CD8-positive, alpha-beta memory T cell (primary cell): ENCODE measurements at regions of chr18 and their contacts with region 1.

Region 1: GRCh38 chr18:63320046-63320689 is 599 bp upstream of the BCL2 start:
- DNase-seq: peak; percentile 81 to 93 (median 89)
- H3K4me3 ChIP-seq: peak overlapping the region; percentile 34
- H3K4me3 Mint-ChIP-seq: peak overlapping the region; percentile 87 to 99 (median 92)
- H3K27ac ChIP-seq: no peak overlapping the region
- H3K27ac Mint-ChIP-seq: peak overlapping the region; percentile 65 to 95 (median 90)
- H3K4me1 ChIP-seq: peaks cover 13% of the 10 kb centered on the region
- H3K4me1 Mint-ChIP-seq: peaks cover 30 to 56% (median 54%) of the 10 kb centered on the region in 3 donors
- H3K27me3 ChIP-seq: no peaks in the 10 kb centered on the region
- H3K27me3 Mint-ChIP-seq: no peaks in the 10 kb centered on the region

Region 2: DNA sequence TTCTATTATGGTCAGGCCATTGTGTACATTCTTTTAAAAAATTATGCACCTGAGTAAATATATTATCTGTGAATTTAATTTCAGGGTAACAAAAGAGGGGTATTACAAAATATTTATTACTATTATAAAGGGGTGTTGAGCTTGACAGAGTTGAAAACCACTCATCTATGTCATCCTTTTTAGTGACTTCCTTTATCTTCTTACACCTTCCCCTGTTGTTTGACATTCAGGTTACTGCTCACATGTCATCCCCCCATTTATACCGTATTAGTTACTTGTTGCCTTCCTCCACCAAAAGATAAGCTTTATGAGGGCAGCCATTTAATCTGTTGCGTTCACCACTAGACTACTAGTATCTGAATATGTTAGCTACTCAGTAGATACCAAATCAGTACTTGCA is 291.8 kb before region 1 on chr18:
- CTCF ChIA-PET with region 1: no interaction called
- POLR2A ChIA-PET with region 1: no interaction called
- DNase-seq: no peak
- H3K4me3 ChIP-seq: no peak overlapping the region
- H3K4me3 Mint-ChIP-seq: no peak overlapping the region
- H3K27ac ChIP-seq: no peak overlapping the region
- H3K27ac Mint-ChIP-seq: no peak overlapping the region
- H3K4me1 ChIP-seq: no peaks in the 10 kb centered on the region
- H3K4me1 Mint-ChIP-seq: no peaks in the 10 kb centered on the region
- H3K27me3 ChIP-seq: no peaks in the 10 kb centered on the region
- H3K27me3 Mint-ChIP-seq: peaks cover 2 to 4% of the 10 kb centered on the region in 2 donors

Region 3: DNA sequence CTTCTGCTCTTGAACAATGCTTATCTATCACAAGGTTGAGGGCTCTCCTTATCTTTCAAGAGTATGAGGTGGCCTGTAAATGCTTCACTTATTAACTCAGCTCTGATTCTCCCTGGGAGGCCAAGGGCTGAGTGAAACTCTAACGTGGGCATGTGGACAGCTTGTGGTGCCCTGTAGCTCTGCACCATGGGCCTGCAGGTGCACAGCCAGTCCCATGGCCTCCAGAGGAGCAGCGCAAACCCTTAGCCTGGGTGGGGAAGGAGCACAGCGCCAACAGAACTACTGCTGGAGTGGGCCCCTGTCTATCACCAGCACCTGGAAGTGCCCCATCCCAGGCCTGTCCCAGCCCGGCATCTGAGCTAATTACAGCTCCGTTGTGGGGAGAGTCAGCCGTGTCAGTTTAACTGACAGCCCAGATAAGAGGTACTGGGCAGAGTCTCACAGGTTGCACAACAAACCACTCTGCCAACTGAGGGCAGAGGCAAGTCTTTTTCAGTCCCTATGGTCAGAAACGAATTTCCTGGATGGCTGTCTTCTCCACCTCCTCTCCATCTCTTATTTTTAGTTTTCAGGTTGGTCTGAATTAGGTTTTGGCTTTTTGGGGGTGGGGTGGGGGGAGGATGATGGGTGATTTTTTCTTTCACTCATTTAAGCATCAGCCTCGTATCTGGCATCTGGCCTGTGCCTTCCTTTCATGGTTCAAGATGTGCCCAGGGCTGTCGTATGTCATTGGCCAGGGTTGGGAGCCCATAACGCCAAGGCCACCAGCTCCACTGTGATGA is 220.1 kb before region 1 on chr18:
- CTCF ChIA-PET with region 1: no interaction called
- POLR2A ChIA-PET with region 1: no interaction called
- DNase-seq: no peak
- H3K4me3 ChIP-seq: no peak overlapping the region
- H3K4me3 Mint-ChIP-seq: peak overlapping the region in 3 of 7 donors; percentile 12 to 39 (median 37)
- H3K27ac ChIP-seq: no peak overlapping the region
- H3K27ac Mint-ChIP-seq: peak overlapping the region in 1 of 8 donors; percentile 7
- H3K4me1 ChIP-seq: peaks cover 50% of the 10 kb centered on the region
- H3K4me1 Mint-ChIP-seq: peaks cover 39 to 56% (median 50%) of the 10 kb centered on the region in 3 donors
- H3K27me3 ChIP-seq: no peaks in the 10 kb centered on the region
- H3K27me3 Mint-ChIP-seq: peaks cover 0 to 3% of the 10 kb centered on the region in 2 donors

Region 4: DNA sequence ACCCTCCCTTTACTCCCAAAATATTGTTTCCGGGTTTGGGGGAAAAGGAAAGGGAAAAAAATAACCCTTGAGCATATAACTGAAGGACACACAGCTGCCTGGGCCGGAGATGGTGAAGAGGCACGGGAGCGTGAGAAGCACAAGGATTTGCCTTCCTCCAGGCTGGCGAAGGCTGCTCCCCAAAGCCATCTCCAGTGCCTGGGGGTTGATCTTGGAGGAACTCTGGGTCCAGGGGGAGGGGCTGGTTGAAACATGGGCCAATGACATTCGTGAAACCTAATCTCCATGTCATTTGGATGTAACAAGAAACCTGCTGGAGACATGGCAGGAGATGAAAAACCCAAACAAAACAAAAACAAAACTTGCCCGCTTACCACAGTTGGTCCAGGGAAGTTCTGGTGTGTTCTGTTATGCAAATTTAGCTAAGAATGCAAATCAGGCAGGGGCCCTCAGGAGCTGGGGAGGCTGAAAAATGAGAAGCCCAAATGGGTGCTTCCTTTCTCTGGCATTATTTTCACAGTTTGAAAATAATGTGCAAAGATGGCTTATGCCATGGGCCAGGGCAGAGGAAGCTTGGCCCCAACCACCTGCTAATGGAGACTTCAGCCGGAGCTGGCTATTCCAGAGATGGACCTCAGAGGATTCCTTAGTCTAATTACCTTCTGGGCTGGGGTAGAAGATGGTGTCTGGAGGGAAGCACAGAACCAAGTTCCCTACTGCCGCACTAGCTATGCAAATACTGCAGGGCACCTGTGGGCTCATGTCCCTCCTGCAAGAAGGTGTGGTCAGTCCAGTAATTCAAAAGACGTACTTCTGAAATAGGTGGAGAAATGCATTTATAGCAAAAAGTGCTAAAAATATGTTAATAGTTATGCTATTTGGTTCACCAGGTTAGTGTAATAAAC is 181.5 kb before region 1 on chr18:
- CTCF ChIA-PET with region 1: interaction called, 50 read pairs
- POLR2A ChIA-PET with region 1: no interaction called
- DNase-seq: no peak
- H3K4me3 ChIP-seq: peak overlapping the region; percentile 42
- H3K4me3 Mint-ChIP-seq: peak overlapping the region; percentile 53 to 94 (median 87)
- H3K27ac ChIP-seq: no peak overlapping the region
- H3K27ac Mint-ChIP-seq: peak overlapping the region; percentile 86 to 97 (median 94)
- H3K4me1 ChIP-seq: peaks cover 30% of the 10 kb centered on the region
- H3K4me1 Mint-ChIP-seq: peaks cover 52 to 79% (median 76%) of the 10 kb centered on the region in 3 donors
- H3K27me3 ChIP-seq: no peaks in the 10 kb centered on the region
- H3K27me3 Mint-ChIP-seq: peaks cover 0 to 2% of the 10 kb centered on the region in 2 donors

Region 5: GRCh38 chr18:63161761-63162195 is 158.4 kb before region 1 on chr18:
- CTCF ChIA-PET with region 1: interaction called, 144 read pairs
- POLR2A ChIA-PET with region 1: interaction called, 21 read pairs
- DNase-seq: peak; percentile 66 to 92 (median 79)
- H3K4me3 ChIP-seq: peak overlapping the region; percentile 38
- H3K4me3 Mint-ChIP-seq: peak overlapping the region; percentile 72 to 89 (median 85)
- H3K27ac ChIP-seq: peak overlapping the region; percentile 92
- H3K27ac Mint-ChIP-seq: peak overlapping the region; percentile 92 to 99 (median 96)
- H3K4me1 ChIP-seq: peaks cover 77% of the 10 kb centered on the region
- H3K4me1 Mint-ChIP-seq: peaks cover 90 to 96% (median 96%) of the 10 kb centered on the region in 3 donors
- H3K27me3 ChIP-seq: no peaks in the 10 kb centered on the region
- H3K27me3 Mint-ChIP-seq: no peaks in the 10 kb centered on the region

Region 6: GRCh38 chr18:63224630-63225029 is 95.5 kb before region 1 on chr18:
- CTCF ChIA-PET with region 1: interaction called, 10 read pairs
- POLR2A ChIA-PET with region 1: interaction called, 5 read pairs
- DNase-seq: no peak
- H3K4me3 ChIP-seq: no peak overlapping the region
- H3K4me3 Mint-ChIP-seq: peak overlapping the region in 5 of 7 donors; percentile 1 to 37 (median 15)
- H3K27ac ChIP-seq: no peak overlapping the region
- H3K27ac Mint-ChIP-seq: peak overlapping the region; percentile 34 to 89 (median 75)
- H3K4me1 ChIP-seq: peaks cover 59% of the 10 kb centered on the region
- H3K4me1 Mint-ChIP-seq: peaks cover 71 to 89% (median 86%) of the 10 kb centered on the region in 3 donors
- H3K27me3 ChIP-seq: no peaks in the 10 kb centered on the region
- H3K27me3 Mint-ChIP-seq: no peaks in the 10 kb centered on the region

Region 7: GRCh38 chr18:63292831-63293683 is 27.1 kb before region 1 on chr18:
- CTCF ChIA-PET with region 1: interaction called, 58 read pairs
- POLR2A ChIA-PET with region 1: interaction called, 15 read pairs
- DNase-seq: peak in 2 of 5 donors; percentile 6 to 55
- H3K4me3 ChIP-seq: peak overlapping the region; percentile 20
- H3K4me3 Mint-ChIP-seq: peak overlapping the region; percentile 14 to 79 (median 66)
- H3K27ac ChIP-seq: peak overlapping the region; percentile 12
- H3K27ac Mint-ChIP-seq: peak overlapping the region in 5 of 8 donors; percentile 56 to 93 (median 80)
- H3K4me1 ChIP-seq: peaks cover 60% of the 10 kb centered on the region
- H3K4me1 Mint-ChIP-seq: peaks cover 15 to 57% (median 19%) of the 10 kb centered on the region in 3 donors
- H3K27me3 ChIP-seq: no peaks in the 10 kb centered on the region
- H3K27me3 Mint-ChIP-seq: no peaks in the 10 kb centered on the region

Region 8: DNA sequence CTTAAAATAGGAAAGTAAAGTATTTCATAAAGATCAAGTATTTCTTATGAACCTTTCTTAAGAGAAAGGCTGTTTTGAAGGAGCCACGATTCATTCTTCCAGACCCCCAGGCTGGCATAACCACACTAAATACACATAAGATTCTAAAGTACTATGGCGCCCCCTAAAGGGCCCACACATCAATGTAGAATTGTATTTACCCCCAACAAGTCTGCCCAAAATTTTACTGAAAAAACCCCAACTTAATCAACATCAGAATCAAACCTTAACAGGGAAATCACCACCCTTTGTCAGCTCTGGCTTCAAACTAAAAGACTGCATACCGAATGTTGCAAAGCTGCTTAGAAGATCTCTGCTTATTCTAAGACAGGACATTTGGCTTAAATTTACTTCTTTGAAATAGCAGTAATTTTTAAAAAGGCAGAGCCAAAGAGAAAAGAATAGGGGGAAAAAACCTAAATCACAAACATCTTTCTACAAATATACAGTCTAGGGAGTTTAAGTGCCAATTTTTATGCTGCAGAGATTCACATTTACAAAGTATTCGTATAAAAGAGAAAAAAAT is 19.8 kb after region 1 on chr18:
- CTCF ChIA-PET with region 1: interaction called, 11 read pairs
- POLR2A ChIA-PET with region 1: no interaction called
- DNase-seq: peak in 4 of 5 donors; percentile 25 to 54 (median 43)
- H3K4me3 ChIP-seq: no peak overlapping the region
- H3K4me3 Mint-ChIP-seq: no peak overlapping the region
- H3K27ac ChIP-seq: no peak overlapping the region
- H3K27ac Mint-ChIP-seq: peak overlapping the region in 3 of 8 donors; percentile 8 to 76 (median 25)
- H3K4me1 ChIP-seq: no peaks in the 10 kb centered on the region
- H3K4me1 Mint-ChIP-seq: peaks cover 6 to 7% (median 6%) of the 10 kb centered on the region in 3 donors
- H3K27me3 ChIP-seq: no peaks in the 10 kb centered on the region
- H3K27me3 Mint-ChIP-seq: no peaks in the 10 kb centered on the region

Region 9: GRCh38 chr18:63451799-63452660 is 131.9 kb after region 1 on chr18:
- CTCF ChIA-PET with region 1: no interaction called
- POLR2A ChIA-PET with region 1: no interaction called
- DNase-seq: no peak
- H3K4me3 ChIP-seq: no peak overlapping the region
- H3K4me3 Mint-ChIP-seq: no peak overlapping the region
- H3K27ac ChIP-seq: no peak overlapping the region
- H3K27ac Mint-ChIP-seq: peak overlapping the region in 1 of 8 donors; percentile 51
- H3K4me1 ChIP-seq: no peaks in the 10 kb centered on the region
- H3K4me1 Mint-ChIP-seq: no peaks in the 10 kb centered on the region
- H3K27me3 ChIP-seq: no peaks in the 10 kb centered on the region
- H3K27me3 Mint-ChIP-seq: peaks cover 0 to under 1% of the 10 kb centered on the region in 2 donors